AG04449 (cell line): ENCODE measurements at regions of chr16 and their contacts with region 1.

Region 1: GRCh38 chr16:55465077-55465896 is 13.7 kb upstream of the MMP2 start:
- DNase-seq: no peak
- H3K4me3 ChIP-seq: no peak overlapping the region
- CTCF ChIP-seq: peak; percentile 97

Region 2: GRCh38 chr16:55411231-55411630 is 54.1 kb before region 1 on chr16:
- CTCF ChIA-PET with region 1: no interaction called
- POLR2A ChIA-PET with region 1: no interaction called
- DNase-seq: no peak
- H3K4me3 ChIP-seq: no peak overlapping the region
- CTCF ChIP-seq: no peak

Region 3: DNA sequence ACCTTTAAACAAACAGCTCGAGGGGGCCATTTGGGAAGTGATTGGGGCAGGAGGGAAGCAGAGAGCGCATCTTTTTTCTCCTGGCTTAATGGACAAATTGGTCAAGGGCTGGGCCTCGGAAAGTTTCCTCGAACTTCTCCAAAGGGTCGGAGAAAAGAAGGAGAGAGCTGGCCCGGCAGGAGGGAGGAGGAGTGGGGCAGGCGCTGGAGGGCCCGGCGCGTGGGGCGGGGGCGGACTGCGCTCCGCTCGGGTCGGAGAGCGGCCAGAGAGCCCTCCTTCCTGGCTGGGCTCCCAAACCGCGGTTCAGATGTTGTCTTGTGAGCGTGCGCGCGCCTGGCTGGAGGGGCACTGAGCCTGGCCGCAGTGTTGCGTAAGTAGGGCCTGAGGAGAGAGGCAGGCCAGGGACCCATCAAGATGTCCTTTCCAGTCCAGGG is 15.0 kb after region 1 on chr16:
- CTCF ChIA-PET with region 1: interaction called, 21 read pairs
- POLR2A ChIA-PET with region 1: no interaction called
- DNase-seq: peak; percentile 76
- H3K4me3 ChIP-seq: peak overlapping the region; percentile 85
- CTCF ChIP-seq: no peak

Region 4: GRCh38 chr16:55502801-55503366 is 37.6 kb after region 1 on chr16:
- CTCF ChIA-PET with region 1: interaction called, 44 read pairs
- POLR2A ChIA-PET with region 1: no interaction called
- DNase-seq: no peak
- H3K4me3 ChIP-seq: no peak overlapping the region
- CTCF ChIP-seq: no peak

Region 5: DNA sequence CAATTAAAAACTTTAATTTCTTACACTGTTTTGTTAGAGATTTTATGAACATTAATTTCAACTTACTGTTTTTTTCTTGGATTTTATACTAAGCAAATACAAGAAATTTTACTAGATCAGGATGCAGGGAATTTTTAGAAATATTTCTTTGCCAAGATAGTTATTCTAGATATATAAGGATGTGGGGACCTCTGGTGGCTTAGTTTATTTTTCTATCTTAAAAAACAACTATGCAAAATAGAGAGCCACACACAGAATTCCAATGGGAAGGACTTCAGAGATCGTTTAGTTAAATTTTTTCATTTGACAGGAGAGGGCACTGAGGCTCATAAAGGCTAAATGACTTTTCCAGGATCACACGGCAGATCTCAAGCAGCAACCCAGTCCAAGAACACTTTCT is 78.2 kb after region 1 on chr16:
- CTCF ChIA-PET with region 1: interaction called, 232 read pairs
- POLR2A ChIA-PET with region 1: no interaction called
- DNase-seq: no peak
- H3K4me3 ChIP-seq: no peak overlapping the region
- CTCF ChIP-seq: no peak

Region 6: GRCh38 chr16:55577887-55578286 is 112.6 kb after region 1 on chr16:
- CTCF ChIA-PET with region 1: interaction called, 16 read pairs
- POLR2A ChIA-PET with region 1: no interaction called
- DNase-seq: no peak
- H3K4me3 ChIP-seq: no peak overlapping the region
- CTCF ChIP-seq: no peak

Region 7: DNA sequence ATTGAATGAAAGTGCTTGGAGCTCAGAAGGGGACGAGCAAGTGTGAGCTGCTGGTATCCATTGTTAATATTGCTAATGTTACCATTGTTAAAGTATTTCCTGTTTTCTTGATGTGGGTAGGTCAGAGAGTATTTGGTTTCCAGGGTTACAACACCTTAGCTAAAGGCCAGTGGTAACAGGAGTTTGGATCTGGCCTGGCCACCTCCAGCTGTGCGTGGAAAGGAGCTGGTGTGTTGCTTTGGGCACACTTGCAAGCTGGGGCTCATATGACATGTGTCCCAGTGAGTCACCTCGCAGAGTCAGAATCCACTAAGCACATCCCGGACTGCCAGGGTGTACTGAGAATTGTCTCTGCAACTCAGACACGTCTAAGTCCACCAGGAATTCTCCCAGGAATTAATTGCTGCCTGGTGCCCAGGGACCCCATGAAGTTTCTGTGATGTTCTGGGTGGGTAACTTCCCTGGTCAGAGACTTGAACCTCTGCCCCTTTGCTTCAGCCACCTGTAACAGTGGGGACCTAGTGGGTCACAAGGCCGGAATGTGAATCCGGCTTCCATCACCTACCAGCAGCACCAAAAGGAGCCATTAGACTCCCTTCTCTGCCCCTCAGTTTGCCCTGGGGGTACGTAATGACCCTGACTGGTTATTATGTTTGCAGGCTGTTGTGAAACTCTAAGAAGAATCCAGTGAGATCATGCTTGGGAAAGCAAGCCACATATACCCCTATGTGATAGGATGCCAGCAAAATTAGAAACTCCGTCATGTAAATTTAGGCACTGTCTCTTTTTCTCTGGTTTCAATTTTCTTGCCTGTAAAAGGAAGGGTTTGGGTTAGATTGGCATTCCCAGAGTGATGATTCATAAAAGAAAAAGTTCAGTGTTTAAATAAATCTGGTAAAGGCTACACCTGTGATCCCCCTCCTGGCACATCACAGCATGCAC is 203.3 kb after region 1 on chr16:
- CTCF ChIA-PET with region 1: interaction called, 13 read pairs
- POLR2A ChIA-PET with region 1: no interaction called
- DNase-seq: no peak
- H3K4me3 ChIP-seq: no peak overlapping the region
- CTCF ChIP-seq: no peak

Region 8: GRCh38 chr16:55842369-55843104 is 377.2 kb after region 1 on chr16:
- CTCF ChIA-PET with region 1: interaction called, 21 read pairs
- POLR2A ChIA-PET with region 1: no interaction called
- DNase-seq: no peak
- H3K4me3 ChIP-seq: no peak overlapping the region
- CTCF ChIP-seq: peak; percentile 54